Right cardiac atrium (tissue), 5 donors: ENCODE measurements at regions of chr3 and their contacts with region 1.

Region 1: DNA sequence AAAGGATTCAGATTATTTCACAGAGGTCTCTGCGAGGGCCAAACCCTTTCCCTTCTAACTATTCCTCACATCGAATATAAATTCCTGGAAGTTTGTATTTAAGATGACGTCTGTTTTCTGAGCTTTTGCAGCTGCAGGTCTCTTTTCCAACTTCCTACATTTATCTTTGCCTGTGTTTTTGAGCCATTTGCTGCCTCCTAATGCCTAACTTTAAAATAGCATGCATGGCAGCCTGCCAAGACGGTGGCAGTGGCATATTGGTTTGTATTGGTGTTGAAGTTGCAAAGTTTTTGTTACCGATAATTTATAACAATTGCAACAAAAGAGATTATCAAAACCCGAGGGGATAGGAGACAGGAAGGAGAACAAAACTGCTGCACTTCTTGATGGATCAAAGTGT is 187.1 kb upstream of the DNAJC19 start:
- DNase-seq: peak; percentile 60 to 85 (median 60)
- ATAC-seq: no peak
- H3K4me3 ChIP-seq: no peak overlapping the region
- H3K27ac ChIP-seq: no peak overlapping the region
- H3K4me1 ChIP-seq: no peaks in the 10 kb centered on the region
- H3K27me3 ChIP-seq: no peaks in the 10 kb centered on the region

Region 2: GRCh38 chr3:180802837-180803236 is 373.8 kb before region 1 on chr3:
- intact Hi-C with region 1: loop called in 3 of 4 experiments (anchors 5 kb)
- DNase-seq: no peak
- ATAC-seq: no peak
- H3K4me3 ChIP-seq: no peak overlapping the region
- H3K27ac ChIP-seq: no peak overlapping the region
- H3K4me1 ChIP-seq: no peaks in the 10 kb centered on the region
- H3K27me3 ChIP-seq: no peaks in the 10 kb centered on the region

Region 3: DNA sequence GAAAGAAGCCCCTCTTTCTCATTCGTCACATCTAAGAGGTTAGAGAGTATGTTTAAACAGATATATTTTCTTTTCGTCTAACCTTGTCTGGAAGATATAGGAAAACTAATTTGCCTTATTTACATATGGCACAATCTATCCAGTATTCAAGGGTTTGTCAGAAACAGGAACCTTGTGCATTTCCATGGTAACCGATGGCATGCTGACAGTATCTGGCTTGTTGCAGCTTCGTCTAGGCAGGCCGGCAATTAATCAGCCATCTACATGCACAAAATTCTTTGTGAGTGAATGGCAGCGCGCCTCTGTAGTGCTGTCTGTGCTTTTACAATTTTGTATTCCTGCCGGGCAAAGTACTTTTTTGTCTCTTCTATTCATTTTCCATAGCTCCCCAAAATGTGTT is 241.1 kb after region 1 on chr3:
- intact Hi-C with region 1: no loop called
- DNase-seq: no peak
- ATAC-seq: no peak
- H3K4me3 ChIP-seq: no peak overlapping the region
- H3K27ac ChIP-seq: no peak overlapping the region
- H3K4me1 ChIP-seq: no peaks in the 10 kb centered on the region
- H3K27me3 ChIP-seq: no peaks in the 10 kb centered on the region